Caco-2 (cell line): ENCODE measurements at regions of chrX and their contacts with region 1.

Region 1: GRCh38 chrX:70262952-70263567 is 3.1 kb upstream of the P2RY4 start:
- DNase-seq: peak; percentile 68
- H3K4me3 ChIP-seq: no peak overlapping the region
- H3K4me3 Mint-ChIP-seq: no peak overlapping the region
- H3K27ac Mint-ChIP-seq: no peak overlapping the region
- H3K4me1 ChIP-seq: no peaks in the 10 kb centered on the region
- H3K4me1 Mint-ChIP-seq: peaks cover 5% of the 10 kb centered on the region
- H3K27me3 ChIP-seq: no peaks in the 10 kb centered on the region
- H3K27me3 Mint-ChIP-seq: peaks cover 4% of the 10 kb centered on the region
- CTCF ChIP-seq: peak; percentile 46 to 70

Region 2: DNA sequence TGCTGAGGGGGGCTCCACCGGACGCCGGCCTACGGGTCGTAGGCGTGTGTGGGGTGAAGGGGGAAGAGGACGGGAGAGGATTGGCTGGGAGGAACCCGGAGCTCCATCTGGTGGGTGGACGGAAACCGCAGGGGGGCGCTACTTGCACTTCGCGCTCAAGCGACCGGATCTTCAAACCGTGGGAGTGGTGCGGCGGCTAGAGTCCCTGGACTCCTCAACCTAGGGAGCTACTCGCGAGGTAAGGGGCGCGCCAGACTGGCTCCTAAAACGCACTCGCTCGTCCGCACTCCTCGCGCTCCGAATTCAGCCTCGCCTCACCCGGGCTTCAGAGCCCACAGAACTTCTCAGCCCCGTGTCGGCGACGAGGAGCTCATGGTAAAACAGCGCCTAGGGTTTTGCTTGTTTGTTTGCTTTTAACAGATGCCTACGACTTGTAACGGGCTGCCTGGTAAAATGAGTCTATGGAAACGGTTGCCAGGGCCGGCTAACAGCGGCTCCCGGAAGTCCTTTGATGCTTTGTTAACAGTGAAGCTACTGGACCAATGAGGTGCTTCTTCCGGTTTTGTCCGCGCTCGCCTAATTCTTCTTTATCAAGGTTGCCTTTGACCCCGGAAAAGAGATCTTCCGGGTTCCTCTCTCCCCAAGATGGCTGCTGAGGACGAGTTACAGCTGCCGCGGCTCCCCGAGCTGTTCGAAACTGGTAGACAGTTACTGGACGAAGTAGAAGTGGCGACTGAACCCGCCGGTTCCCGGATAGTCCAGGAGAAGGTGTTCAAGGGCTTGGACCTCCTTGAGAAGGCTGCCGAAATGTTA is 129.6 kb before region 1 on chrX and contains the start of gene IGBP1:
- CTCF ChIA-PET with region 1: interaction called, 8 read pairs
- POLR2A ChIA-PET with region 1: interaction called, 7 read pairs
- intact Hi-C with region 1: loop called (anchors 2 kb)
- DNase-seq: peak; percentile 85
- H3K4me3 ChIP-seq: peak within 1 kb of the TSS; percentile 68
- H3K4me3 Mint-ChIP-seq: peak within 1 kb of the TSS; percentile 99
- H3K27ac Mint-ChIP-seq: peak within 1 kb of the TSS; percentile 100
- H3K4me1 ChIP-seq: no peaks in the 10 kb centered on the region
- H3K4me1 Mint-ChIP-seq: no peaks in the 10 kb centered on the region
- H3K27me3 ChIP-seq: no peaks in the 10 kb centered on the region
- H3K27me3 Mint-ChIP-seq: no peaks in the 10 kb centered on the region
- CTCF ChIP-seq: peak; percentile 51 to 57
- total RNA-seq, gene IGBP1: 41.6 and 44.7 TPM in 2 replicates

Region 3: DNA sequence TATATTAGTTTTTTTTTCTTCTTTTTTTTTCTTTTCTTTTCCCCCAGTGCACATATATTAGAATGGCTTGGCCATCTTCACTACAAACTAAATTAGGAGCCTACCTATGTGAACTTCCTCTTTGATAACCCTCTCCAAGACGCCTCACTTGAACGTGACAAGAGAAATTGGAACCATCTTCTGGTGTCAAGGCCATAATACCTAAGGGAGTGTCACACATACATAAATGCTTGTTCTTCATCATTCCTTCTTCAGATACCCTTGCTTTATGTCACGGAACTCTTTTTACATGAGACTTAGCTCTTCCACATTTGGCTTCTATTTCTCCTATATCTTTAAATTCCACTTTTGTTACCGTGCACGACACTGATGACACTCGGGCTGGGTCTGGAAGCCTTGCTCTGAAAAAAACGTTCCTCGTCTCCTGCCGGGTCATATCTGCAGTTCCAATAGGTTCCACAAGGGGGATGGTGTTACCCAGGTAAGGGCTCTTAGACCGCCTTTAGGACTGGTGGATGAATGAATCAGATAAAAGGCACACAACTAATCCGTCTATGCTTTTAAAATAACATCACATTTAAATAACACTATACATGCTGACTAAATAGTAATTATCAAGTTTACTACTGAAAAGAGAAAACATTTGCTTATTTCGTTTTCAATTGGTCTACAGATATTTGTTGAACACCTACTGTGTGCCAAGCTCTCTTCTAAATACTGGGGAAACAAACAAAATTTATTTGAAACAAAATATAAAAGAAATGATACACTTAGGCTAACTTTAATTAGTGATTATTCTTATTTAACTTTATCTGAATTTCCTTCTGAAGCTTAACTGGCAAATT is 65.9 kb before region 1 on chrX:
- CTCF ChIA-PET with region 1: interaction called, 4 read pairs
- POLR2A ChIA-PET with region 1: no interaction called
- intact Hi-C with region 1: loop called (anchors 1 kb)
- DNase-seq: peak; percentile 48 to 75
- H3K4me3 ChIP-seq: no peak overlapping the region
- H3K4me3 Mint-ChIP-seq: peak overlapping the region; percentile 49
- H3K27ac Mint-ChIP-seq: no peak overlapping the region
- H3K4me1 ChIP-seq: no peaks in the 10 kb centered on the region
- H3K4me1 Mint-ChIP-seq: no peaks in the 10 kb centered on the region
- H3K27me3 ChIP-seq: no peaks in the 10 kb centered on the region
- H3K27me3 Mint-ChIP-seq: peaks cover 4% of the 10 kb centered on the region
- CTCF ChIP-seq: peak; percentile 22 to 57

Region 4: GRCh38 chrX:70433848-70434351 is 170.8 kb after region 1 on chrX:
- CTCF ChIA-PET with region 1: no interaction called
- POLR2A ChIA-PET with region 1: no interaction called
- intact Hi-C with region 1: no loop called
- DNase-seq: peak; percentile 79 to 84
- H3K4me3 ChIP-seq: peak overlapping the region; percentile 54
- H3K4me3 Mint-ChIP-seq: peak overlapping the region; percentile 86
- H3K27ac Mint-ChIP-seq: peak overlapping the region; percentile 90
- H3K4me1 ChIP-seq: peaks cover 7% of the 10 kb centered on the region; the same call in 1 of the 2 replicates
- H3K4me1 Mint-ChIP-seq: peaks cover 6% of the 10 kb centered on the region
- H3K27me3 ChIP-seq: no peaks in the 10 kb centered on the region
- H3K27me3 Mint-ChIP-seq: no peaks in the 10 kb centered on the region
- CTCF ChIP-seq: peak; percentile 76